ENCODE measurements at regions of chr5 and their contacts with region 1.

Region 1: GRCh38 chr5:126837906-126838539 is 61.1 kb downstream of the LMNB1 start:
- DNase-seq: peak; percentile 13
- H3K4me3 Mint-ChIP-seq: no peak overlapping the region
- H3K27ac Mint-ChIP-seq: peak overlapping the region; percentile 8
- H3K4me1 Mint-ChIP-seq: no peaks in the 10 kb centered on the region
- H3K27me3 Mint-ChIP-seq: no peaks in the 10 kb centered on the region
- CTCF ChIP-seq: peak; percentile 48

Region 2: DNA sequence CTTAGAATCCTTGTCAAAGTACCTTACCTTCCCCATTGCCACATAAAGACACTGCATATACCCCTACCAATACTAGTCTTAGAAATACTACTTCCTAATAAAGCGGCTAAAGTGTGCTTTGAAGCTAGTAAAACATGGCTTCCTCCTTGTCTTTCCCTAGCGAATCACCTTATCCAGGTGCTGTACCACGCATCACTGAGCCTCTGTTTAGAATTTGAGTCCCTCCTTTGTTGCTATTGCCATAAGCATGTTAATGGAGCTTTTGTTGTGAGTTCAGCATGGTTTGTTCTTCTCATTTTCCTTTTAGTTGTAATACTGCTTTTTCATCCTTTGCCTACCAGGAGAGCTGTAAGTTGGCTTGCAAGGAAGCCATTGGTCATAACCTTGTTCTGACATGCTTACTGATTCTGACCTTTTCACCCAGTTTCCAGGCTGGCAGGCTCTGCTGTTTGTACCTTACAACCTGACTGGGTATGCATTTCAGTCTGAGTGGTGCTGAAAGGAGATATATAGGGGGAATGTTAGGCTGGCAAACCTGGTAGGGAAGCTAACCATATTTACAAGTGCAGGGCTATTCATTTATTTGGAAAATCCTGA is 11.3 kb before region 1 on chr5:
- CTCF ChIA-PET with region 1: interaction called, 14 read pairs
- POLR2A ChIA-PET with region 1: interaction called, 5 read pairs
- intact Hi-C with region 1: no loop called
- DNase-seq: no peak
- H3K4me3 Mint-ChIP-seq: no peak overlapping the region
- H3K27ac Mint-ChIP-seq: no peak overlapping the region
- H3K4me1 Mint-ChIP-seq: no peaks in the 10 kb centered on the region
- H3K27me3 Mint-ChIP-seq: no peaks in the 10 kb centered on the region
- CTCF ChIP-seq: no peak

Region 3: DNA sequence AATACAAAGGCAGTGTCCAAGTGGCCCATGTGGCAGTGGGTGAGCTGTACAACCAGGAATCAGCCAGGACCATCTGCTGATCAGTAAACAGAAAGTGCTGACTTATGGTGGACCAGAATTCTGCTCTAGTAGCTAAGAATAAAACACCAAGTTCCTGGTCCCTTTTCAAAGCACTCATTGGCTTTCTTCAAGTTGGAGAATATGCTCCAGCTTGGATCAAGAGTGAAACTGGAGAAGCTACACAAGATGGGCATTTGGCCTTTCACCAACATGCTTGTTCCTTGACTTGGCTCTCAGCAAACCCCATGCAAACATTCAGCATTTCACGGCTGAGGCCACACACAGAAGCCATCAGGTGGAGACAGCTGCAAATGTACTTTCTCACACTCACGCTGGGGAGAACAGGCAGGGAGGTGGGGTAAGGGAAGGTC is 160.2 kb after region 1 on chr5:
- CTCF ChIA-PET with region 1: no interaction called
- POLR2A ChIA-PET with region 1: no interaction called
- intact Hi-C with region 1: no loop called
- DNase-seq: no peak
- H3K4me3 Mint-ChIP-seq: no peak overlapping the region
- H3K27ac Mint-ChIP-seq: no peak overlapping the region
- H3K4me1 Mint-ChIP-seq: no peaks in the 10 kb centered on the region
- H3K27me3 Mint-ChIP-seq: no peaks in the 10 kb centered on the region
- CTCF ChIP-seq: no peak

Region 4: GRCh38 chr5:127441799-127442484 is 603.9 kb after region 1 on chr5:
- CTCF ChIA-PET with region 1: interaction called, 12 read pairs
- POLR2A ChIA-PET with region 1: no interaction called
- intact Hi-C with region 1: loop called (anchors 1 kb)
- DNase-seq: peak; percentile 43
- H3K4me3 Mint-ChIP-seq: no peak overlapping the region
- H3K27ac Mint-ChIP-seq: no peak overlapping the region
- H3K4me1 Mint-ChIP-seq: no peaks in the 10 kb centered on the region
- H3K27me3 Mint-ChIP-seq: peaks cover 12% of the 10 kb centered on the region
- CTCF ChIP-seq: peak; percentile 55